CD8-positive, alpha-beta T cell (primary cell): ENCODE measurements at regions of chr5 and their contacts with region 1.

Region 1: GRCh38 chr5:173144200-173145176 is at the start of gene BNIP1:
- DNase-seq: peak; percentile 91 to 98 (median 97)
- ATAC-seq: peak; percentile 94
- H3K4me3 ChIP-seq: peak within 1 kb of the TSS; percentile 74 to 99
- H3K4me3 Mint-ChIP-seq: peak within 1 kb of the TSS; percentile 99
- H3K27ac ChIP-seq: peak within 1 kb of the TSS; percentile 95 to 98
- H3K27ac Mint-ChIP-seq: peak within 1 kb of the TSS; percentile 99
- H3K4me1 ChIP-seq: peaks cover 10% of the 10 kb centered on the region
- H3K4me1 Mint-ChIP-seq: peaks cover 11% of the 10 kb centered on the region
- H3K27me3 ChIP-seq: no peaks in the 10 kb centered on the region
- H3K27me3 Mint-ChIP-seq: no peaks in the 10 kb centered on the region
- CTCF ChIP-seq: peak; percentile 68
- total RNA-seq, gene BNIP1: 22.7 to 24.0 TPM

Region 2: GRCh38 chr5:171387345-171387969 is 1757.0 kb before region 1 on chr5 and contains the start of gene NPM1:
- CTCF ChIA-PET with region 1: no interaction called
- POLR2A ChIA-PET with region 1: no interaction called
- intact Hi-C with region 1: loop called in 1 of 2 experiments (anchors 10 kb)
- DNase-seq: peak; percentile 95 to 100 (median 97)
- ATAC-seq: peak; percentile 88
- H3K4me3 ChIP-seq: peak within 1 kb of the TSS; percentile 92 to 96
- H3K4me3 Mint-ChIP-seq: peak within 1 kb of the TSS; percentile 96
- H3K27ac ChIP-seq: peak within 1 kb of the TSS; percentile 94 to 97
- H3K27ac Mint-ChIP-seq: peak within 1 kb of the TSS; percentile 99
- H3K4me1 ChIP-seq: peaks cover 45% of the 10 kb centered on the region
- H3K4me1 Mint-ChIP-seq: peaks cover 46% of the 10 kb centered on the region
- H3K27me3 ChIP-seq: no peaks in the 10 kb centered on the region
- H3K27me3 Mint-ChIP-seq: peaks cover 3% of the 10 kb centered on the region
- CTCF ChIP-seq: no peak
- total RNA-seq, gene NPM1: 1,297 to 1,299 TPM

Region 3: DNA sequence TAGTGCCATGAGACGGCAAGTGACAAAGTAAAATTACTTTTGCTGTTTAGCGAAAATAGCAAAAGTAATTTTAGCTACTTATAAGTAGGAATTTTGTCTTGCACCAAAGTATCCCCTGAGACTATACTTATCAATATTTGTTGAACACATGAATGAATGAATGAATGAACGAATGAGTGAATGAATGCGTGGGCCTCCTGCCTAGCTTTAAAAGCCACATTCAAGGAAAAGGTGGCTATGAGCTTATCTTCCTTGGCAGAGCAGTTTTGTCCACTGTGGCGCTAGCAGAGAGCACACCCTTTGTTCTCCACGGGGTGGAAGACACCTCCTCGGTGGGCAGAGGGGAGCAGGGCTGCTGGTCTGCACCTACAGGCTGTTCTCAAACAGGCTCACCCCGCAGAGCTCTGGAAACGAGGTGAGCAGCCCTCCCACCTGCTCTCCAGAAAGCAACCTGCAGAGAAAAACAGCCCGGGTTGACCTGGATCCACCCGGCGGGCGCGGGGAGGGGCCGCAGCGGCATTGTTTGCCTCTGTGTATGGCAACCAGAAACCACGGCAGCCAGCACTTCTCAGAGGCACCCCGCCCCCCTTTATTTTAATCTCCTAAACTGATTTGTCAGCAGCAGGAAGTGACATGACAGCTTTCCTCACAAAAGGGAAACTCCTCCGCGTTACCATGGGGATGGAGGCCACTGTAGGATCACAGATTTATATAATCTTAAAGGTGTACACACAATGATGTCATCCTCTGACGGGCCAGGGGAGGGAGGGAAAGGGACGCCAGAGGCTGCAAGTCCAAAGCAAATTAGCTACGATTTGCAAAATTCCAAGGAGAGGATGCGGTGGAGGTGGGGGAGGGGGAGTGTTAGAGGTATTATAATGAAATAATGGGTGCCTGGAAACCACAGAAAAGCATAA is 379.4 kb before region 1 on chr5:
- CTCF ChIA-PET with region 1: no interaction called
- POLR2A ChIA-PET with region 1: no interaction called
- intact Hi-C with region 1: loop called (anchors 2 to 10 kb)
- DNase-seq: peak; percentile 88 to 100 (median 96)
- ATAC-seq: peak; percentile 77
- H3K4me3 ChIP-seq: peak overlapping the region; percentile 41 to 48
- H3K4me3 Mint-ChIP-seq: peak overlapping the region; percentile 81
- H3K27ac ChIP-seq: peak overlapping the region; percentile 86 to 89
- H3K27ac Mint-ChIP-seq: peak overlapping the region; percentile 96
- H3K4me1 ChIP-seq: peaks cover 33% of the 10 kb centered on the region
- H3K4me1 Mint-ChIP-seq: peaks cover 52% of the 10 kb centered on the region
- H3K27me3 ChIP-seq: no peaks in the 10 kb centered on the region
- H3K27me3 Mint-ChIP-seq: no peaks in the 10 kb centered on the region
- CTCF ChIP-seq: no peak

Region 4: GRCh38 chr5:172943283-172943841 is 201.1 kb before region 1 on chr5:
- CTCF ChIA-PET with region 1: no interaction called
- POLR2A ChIA-PET with region 1: no interaction called
- intact Hi-C with region 1: no loop called
- DNase-seq: no peak
- ATAC-seq: no peak
- H3K4me3 ChIP-seq: no peak overlapping the region
- H3K4me3 Mint-ChIP-seq: no peak overlapping the region
- H3K27ac ChIP-seq: no peak overlapping the region
- H3K27ac Mint-ChIP-seq: no peak overlapping the region
- H3K4me1 ChIP-seq: no peaks in the 10 kb centered on the region
- H3K4me1 Mint-ChIP-seq: no peaks in the 10 kb centered on the region
- H3K27me3 ChIP-seq: no peaks in the 10 kb centered on the region
- H3K27me3 Mint-ChIP-seq: no peaks in the 10 kb centered on the region
- CTCF ChIP-seq: no peak

Region 5: DNA sequence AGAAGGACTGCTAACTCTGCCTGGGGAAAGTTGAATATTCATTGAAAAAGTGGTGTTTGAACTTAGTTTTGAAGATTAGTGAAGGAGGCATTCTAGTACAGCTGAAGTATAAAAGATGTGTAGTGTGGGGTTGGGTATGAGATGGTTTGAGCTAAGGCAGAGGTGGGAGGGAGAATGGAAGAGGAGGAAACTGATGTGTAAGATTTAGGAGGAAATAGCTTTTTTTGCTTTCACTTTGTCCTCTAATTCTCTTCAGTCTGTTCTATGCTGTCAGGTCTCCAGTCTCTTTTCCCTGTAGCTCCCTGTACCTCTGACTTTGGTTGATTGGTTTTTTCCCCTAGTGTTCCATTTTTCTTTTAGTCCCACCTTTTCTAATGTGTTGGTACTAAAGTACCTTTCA is 79.3 kb before region 1 on chr5:
- CTCF ChIA-PET with region 1: interaction called, 3 read pairs
- POLR2A ChIA-PET with region 1: no interaction called
- intact Hi-C with region 1: loop called in 1 of 2 experiments (anchors 1 kb)
- DNase-seq: peak in 2 of 9 experiments; percentile 10 to 29
- ATAC-seq: peak; percentile 56
- H3K4me3 ChIP-seq: no peak overlapping the region
- H3K4me3 Mint-ChIP-seq: peak overlapping the region; percentile 59
- H3K27ac ChIP-seq: peak overlapping the region in 1 of 2 experiments; percentile 33
- H3K27ac Mint-ChIP-seq: peak overlapping the region; percentile 86
- H3K4me1 ChIP-seq: peaks cover 40% of the 10 kb centered on the region
- H3K4me1 Mint-ChIP-seq: peaks cover 71% of the 10 kb centered on the region
- H3K27me3 ChIP-seq: no peaks in the 10 kb centered on the region
- H3K27me3 Mint-ChIP-seq: no peaks in the 10 kb centered on the region
- CTCF ChIP-seq: no peak

Region 6: DNA sequence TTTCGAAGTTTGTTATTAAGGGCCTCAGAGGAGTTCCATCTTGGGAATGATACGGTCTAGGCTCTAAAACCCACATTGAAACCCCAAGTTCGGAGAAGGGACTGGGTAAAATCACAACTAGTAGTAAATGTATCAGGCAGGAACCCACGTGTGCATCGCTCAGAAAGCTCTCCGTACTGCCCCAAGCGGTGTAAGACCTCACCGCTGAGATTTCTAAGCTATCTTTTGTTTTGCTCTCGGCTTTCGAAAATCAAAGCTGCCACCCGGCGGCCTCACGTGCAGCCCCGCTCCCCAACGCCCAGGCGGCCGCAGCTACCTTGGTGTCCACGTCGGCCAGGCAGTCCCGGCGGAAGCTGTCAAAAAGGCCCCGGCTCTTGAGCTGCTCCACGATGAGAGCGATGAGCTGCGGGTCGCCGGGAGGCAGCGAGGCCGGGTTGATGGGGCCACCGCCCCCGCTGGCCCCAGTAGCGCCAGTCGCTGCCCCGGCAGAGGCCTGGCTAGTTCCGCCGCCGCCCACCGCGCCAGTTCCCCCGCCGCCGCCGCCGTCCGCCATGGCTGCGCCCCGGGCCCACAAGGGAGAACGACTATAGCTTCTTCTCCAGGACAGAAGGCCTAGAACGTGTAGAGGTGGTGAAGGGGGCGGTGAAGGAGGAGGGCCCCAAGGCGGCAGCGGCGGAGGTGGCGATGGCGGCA is 471.5 kb after region 1 on chr5:
- CTCF ChIA-PET with region 1: no interaction called
- POLR2A ChIA-PET with region 1: no interaction called
- intact Hi-C with region 1: loop called in 1 of 2 experiments (anchors 5 kb)
- DNase-seq: peak; percentile 41 to 88 (median 70)
- ATAC-seq: peak; percentile 60
- H3K4me3 ChIP-seq: peak overlapping the region; percentile 81 to 89
- H3K4me3 Mint-ChIP-seq: peak overlapping the region; percentile 95
- H3K27ac ChIP-seq: peak overlapping the region; percentile 85 to 91
- H3K27ac Mint-ChIP-seq: peak overlapping the region; percentile 97
- H3K4me1 ChIP-seq: peaks cover 34% of the 10 kb centered on the region
- H3K4me1 Mint-ChIP-seq: peaks cover 52% of the 10 kb centered on the region
- H3K27me3 ChIP-seq: no peaks in the 10 kb centered on the region
- H3K27me3 Mint-ChIP-seq: no peaks in the 10 kb centered on the region
- CTCF ChIP-seq: peak; percentile 73

Region 7: GRCh38 chr5:173887610-173888472 is 743.4 kb after region 1 on chr5 and contains the start of gene CPEB4:
- CTCF ChIA-PET with region 1: no interaction called
- POLR2A ChIA-PET with region 1: no interaction called
- intact Hi-C with region 1: loop called (anchors 2 to 10 kb)
- DNase-seq: peak; percentile 92 to 100 (median 96)
- ATAC-seq: peak; percentile 95
- H3K4me3 ChIP-seq: peak within 1 kb of the TSS; percentile 68 to 76
- H3K4me3 Mint-ChIP-seq: peak within 1 kb of the TSS; percentile 100
- H3K27ac ChIP-seq: peak within 1 kb of the TSS; percentile 42 to 97
- H3K27ac Mint-ChIP-seq: peak within 1 kb of the TSS; percentile 99
- H3K4me1 ChIP-seq: peaks cover 48% of the 10 kb centered on the region
- H3K4me1 Mint-ChIP-seq: peaks cover 78% of the 10 kb centered on the region
- H3K27me3 ChIP-seq: no peaks in the 10 kb centered on the region
- H3K27me3 Mint-ChIP-seq: no peaks in the 10 kb centered on the region
- CTCF ChIP-seq: no peak
- total RNA-seq, gene CPEB4: 21.7 to 24.3 TPM